Prostate gland (tissue), 2 donors: ENCODE measurements at regions of chr3 and their contacts with region 1.

Region 1: GRCh38 chr3:138834359-138835212 is at the start of gene PIK3CB:
- DNase-seq: peak; percentile 88
- H3K4me3 ChIP-seq: peak within 1 kb of the TSS; percentile 97 to 98
- H3K27ac ChIP-seq: peak within 1 kb of the TSS; percentile 86 to 94
- H3K4me1 ChIP-seq: no peaks in the 10 kb centered on the region
- H3K27me3 ChIP-seq: no peaks in the 10 kb centered on the region
- CTCF ChIP-seq: peak in 2 of 4 experiments; percentile 35 to 40
- POLR2A ChIP-seq: peak; percentile 81
- total RNA-seq, gene PIK3CB: 27.5 to 28.9 TPM

Region 2: GRCh38 chr3:138608322-138609135 is 226.1 kb before region 1 on chr3 and contains the start of gene FAIM:
- intact Hi-C with region 1: loop called (anchors 5 kb)
- DNase-seq: peak; percentile 56
- H3K4me3 ChIP-seq: peak within 1 kb of the TSS; percentile 78 to 88
- H3K27ac ChIP-seq: peak within 1 kb of the TSS; percentile 91 to 95
- H3K4me1 ChIP-seq: no peaks in the 10 kb centered on the region
- H3K27me3 ChIP-seq: no peaks in the 10 kb centered on the region
- CTCF ChIP-seq: no peak
- POLR2A ChIP-seq: no peak
- total RNA-seq, gene FAIM: 11.5 to 18.9 TPM

Region 3: DNA sequence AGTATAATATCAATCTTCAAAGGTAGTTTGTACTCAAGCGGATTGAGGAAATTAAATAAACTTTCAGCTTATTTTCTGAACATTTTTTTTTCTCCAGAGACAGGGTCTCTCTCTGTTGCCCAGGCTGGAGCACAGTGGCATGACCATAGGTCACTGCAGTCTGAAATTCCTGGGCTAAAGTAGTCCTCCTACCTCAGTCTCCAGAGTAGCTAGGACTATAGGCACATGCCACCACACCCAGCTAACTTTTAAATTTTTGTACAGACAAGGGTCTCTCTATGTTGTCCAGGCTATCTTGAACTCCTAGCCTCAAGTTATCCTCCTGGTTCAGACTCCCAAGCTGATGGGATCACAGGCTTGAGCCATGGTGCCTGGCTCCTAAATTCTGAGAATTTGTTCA is 128.9 kb before region 1 on chr3:
- intact Hi-C with region 1: loop called (anchors 10 kb)
- DNase-seq: no peak
- H3K4me3 ChIP-seq: no peak overlapping the region
- H3K27ac ChIP-seq: no peak overlapping the region
- H3K4me1 ChIP-seq: no peaks in the 10 kb centered on the region
- H3K27me3 ChIP-seq: no peaks in the 10 kb centered on the region
- CTCF ChIP-seq: no peak
- POLR2A ChIP-seq: no peak

Region 4: GRCh38 chr3:138774529-138775253 is 59.9 kb before region 1 on chr3:
- intact Hi-C with region 1: loop called (anchors 10 kb)
- DNase-seq: peak; percentile 64
- H3K4me3 ChIP-seq: no peak overlapping the region
- H3K27ac ChIP-seq: no peak overlapping the region
- H3K4me1 ChIP-seq: peaks cover 3% of the 10 kb centered on the region
- H3K27me3 ChIP-seq: no peaks in the 10 kb centered on the region
- CTCF ChIP-seq: no peak
- POLR2A ChIP-seq: no peak

Region 5: DNA sequence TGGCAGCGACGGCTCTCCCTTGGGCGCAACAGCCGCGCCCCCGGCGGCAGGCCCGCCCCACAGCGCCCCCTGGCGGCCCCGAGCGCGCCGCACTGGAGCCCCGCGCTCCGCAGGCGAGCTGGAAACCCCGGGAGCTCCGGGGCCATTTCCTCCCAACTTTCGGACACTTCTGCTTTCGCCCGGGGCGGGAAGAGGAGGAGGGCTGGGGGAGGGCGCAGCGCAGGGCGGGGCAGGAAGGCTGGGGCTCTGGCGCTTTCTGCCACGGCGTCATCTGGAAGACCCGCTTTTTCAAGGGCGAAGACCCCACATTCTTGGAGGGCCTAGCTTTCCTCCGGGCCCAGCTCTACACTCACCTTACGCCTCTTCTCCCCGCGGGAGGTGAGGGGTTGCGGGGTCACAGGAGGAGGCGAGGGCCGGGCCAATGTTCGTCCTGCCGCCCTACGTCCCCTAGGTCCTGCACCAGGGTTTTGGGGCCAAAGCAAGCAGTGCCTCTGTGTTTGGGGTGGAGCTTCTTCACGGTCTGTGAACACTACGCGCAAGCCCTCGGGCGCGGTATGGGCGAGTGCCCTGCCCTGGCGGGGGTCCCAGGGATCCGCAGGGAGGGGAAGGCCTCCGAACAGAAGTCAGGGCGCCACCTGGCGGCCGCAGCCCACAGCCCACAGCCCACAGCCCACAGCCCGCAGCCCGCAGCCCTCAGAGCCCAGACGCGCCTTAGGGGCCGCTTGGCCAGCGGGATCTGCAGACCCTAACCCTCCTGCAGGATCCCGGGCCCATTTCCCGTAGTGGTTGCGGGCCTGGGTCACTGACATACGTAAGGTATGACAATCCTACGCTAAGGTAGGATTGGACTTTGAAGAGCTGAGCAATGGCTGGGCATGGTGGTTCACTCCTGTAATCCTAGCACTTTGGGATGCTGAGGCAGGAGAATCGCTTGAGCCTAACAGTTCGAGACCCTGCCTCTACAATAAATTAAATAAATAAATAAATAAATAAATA is 81.2 kb after region 1 on chr3:
- intact Hi-C with region 1: loop called (anchors 5 kb)
- DNase-seq: peak; percentile 95
- H3K4me3 ChIP-seq: peak overlapping the region; percentile 51 to 75
- H3K27ac ChIP-seq: peak overlapping the region; percentile 92 to 95
- H3K4me1 ChIP-seq: peaks cover 7% of the 10 kb centered on the region
- H3K27me3 ChIP-seq: no peaks in the 10 kb centered on the region
- CTCF ChIP-seq: peak; percentile 92 to 96 (median 95)
- POLR2A ChIP-seq: peak; percentile 28

Region 6: GRCh38 chr3:138960417-138960852 is 125.8 kb after region 1 on chr3:
- intact Hi-C with region 1: no loop called
- DNase-seq: no peak
- H3K4me3 ChIP-seq: no peak overlapping the region
- H3K27ac ChIP-seq: no peak overlapping the region
- H3K4me1 ChIP-seq: no peaks in the 10 kb centered on the region
- H3K27me3 ChIP-seq: peaks cover 3% of the 10 kb centered on the region
- CTCF ChIP-seq: no peak
- POLR2A ChIP-seq: no peak